ENCODE measurements at regions of chr2 and their contacts with region 1.

Region 1: GRCh38 chr2:190093793-190094192 is 31.3 kb upstream of the MSTN start:
- DNase-seq: peak in 1 of 2 donors; percentile 90
- H3K4me3 ChIP-seq: no peak overlapping the region
- H3K27ac ChIP-seq: peak overlapping the region; percentile 68
- H3K4me1 ChIP-seq: no peaks in the 10 kb centered on the region
- H3K27me3 ChIP-seq: no peaks in the 10 kb centered on the region
- CTCF ChIP-seq: no peak
- POLR2A ChIP-seq: no peak

Region 2: DNA sequence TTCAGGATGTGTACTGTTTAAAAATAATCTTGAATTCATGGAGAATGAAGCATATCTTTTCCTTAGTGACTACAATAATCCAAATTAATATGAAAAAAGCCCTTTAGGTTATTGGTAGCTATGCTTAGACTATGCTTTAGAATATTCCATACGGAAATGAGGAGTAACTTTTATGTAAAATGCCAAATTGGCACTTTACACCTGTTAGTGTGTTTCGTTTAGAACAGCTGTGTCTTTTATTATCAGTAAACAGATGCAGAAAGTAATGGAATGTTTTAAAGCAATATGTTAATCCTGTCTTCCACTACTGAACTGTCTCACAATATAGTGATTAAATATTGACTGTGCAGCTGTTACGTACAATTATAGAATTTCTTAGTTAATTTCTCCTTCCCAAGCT is 180.0 kb before region 1 on chr2:
- intact Hi-C with region 1: no loop called
- DNase-seq: no peak
- H3K4me3 ChIP-seq: no peak overlapping the region
- H3K27ac ChIP-seq: no peak overlapping the region
- H3K4me1 ChIP-seq: no peaks in the 10 kb centered on the region
- H3K27me3 ChIP-seq: no peaks in the 10 kb centered on the region
- CTCF ChIP-seq: no peak
- POLR2A ChIP-seq: no peak

Region 3: GRCh38 chr2:190277234-190278112 is 183.7 kb after region 1 on chr2:
- intact Hi-C with region 1: loop called (anchors 10 kb)
- DNase-seq: no peak
- H3K4me3 ChIP-seq: no peak overlapping the region
- H3K27ac ChIP-seq: no peak overlapping the region
- H3K4me1 ChIP-seq: no peaks in the 10 kb centered on the region
- H3K27me3 ChIP-seq: no peaks in the 10 kb centered on the region
- CTCF ChIP-seq: peak in 2 of 3 experiments; percentile 22 to 35
- POLR2A ChIP-seq: no peak

Measured in vagina (tissue), 2 donors.